ENCODE measurements at regions of chr9 and their contacts with region 1.

Region 1: DNA sequence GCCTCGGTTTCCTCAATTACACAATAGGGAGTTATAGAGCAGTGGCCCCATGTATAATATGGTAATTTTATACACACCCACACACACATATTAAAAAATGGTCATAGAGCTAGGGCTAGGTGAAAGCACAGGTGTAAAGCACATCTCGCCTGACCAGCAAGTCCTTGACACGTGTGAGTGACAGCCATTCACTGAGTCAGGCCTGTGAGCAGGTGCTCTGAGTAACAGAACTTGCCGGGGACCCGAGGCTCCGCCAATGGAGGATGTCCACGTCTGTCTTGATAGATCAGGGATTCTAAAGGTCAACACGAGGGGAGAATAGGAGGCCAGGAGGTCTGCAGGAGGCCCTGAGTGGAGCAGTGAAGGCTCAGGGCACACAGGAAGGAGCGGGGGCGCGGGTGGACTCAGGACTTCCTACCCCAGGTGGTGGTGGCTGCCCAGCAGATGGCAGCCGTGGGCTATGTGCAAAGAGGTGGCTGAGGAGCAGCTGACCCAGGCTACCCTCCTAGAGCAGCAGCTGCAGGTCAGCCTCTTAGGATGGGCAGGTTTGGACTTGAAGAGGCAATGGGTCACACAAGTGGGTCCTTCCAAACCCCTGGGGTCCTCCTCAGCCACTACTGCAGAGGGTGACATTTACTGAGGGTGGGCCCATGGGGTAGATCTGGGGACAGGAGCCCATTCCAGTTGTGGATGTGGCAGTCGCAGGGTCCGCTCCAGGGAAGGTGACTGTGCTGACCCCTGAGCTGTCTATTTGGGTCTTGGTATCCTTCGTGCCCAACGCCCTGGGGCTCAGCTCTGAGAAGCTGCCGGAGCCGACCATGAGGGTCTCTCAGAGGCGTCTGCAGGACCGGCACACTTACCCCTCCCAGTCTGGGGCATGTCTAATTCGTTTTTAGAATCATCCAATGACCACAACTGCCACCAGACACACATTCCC is 45.9 kb downstream of the PRRT1B start:
- DNase-seq: peak; percentile 92
- H3K4me3 Mint-ChIP-seq: peak overlapping the region; percentile 15
- H3K27ac Mint-ChIP-seq: peak overlapping the region; percentile 87
- H3K4me1 Mint-ChIP-seq: peaks cover 33% of the 10 kb centered on the region
- H3K27me3 Mint-ChIP-seq: no peaks in the 10 kb centered on the region

Region 2: GRCh38 chr9:131423171-131423581 is 168.0 kb before region 1 on chr9:
- intact Hi-C with region 1: no loop called
- DNase-seq: peak; percentile 63
- H3K4me3 Mint-ChIP-seq: no peak overlapping the region
- H3K27ac Mint-ChIP-seq: peak overlapping the region; percentile 30
- H3K4me1 Mint-ChIP-seq: peaks cover 45% of the 10 kb centered on the region
- H3K27me3 Mint-ChIP-seq: no peaks in the 10 kb centered on the region

Region 3: DNA sequence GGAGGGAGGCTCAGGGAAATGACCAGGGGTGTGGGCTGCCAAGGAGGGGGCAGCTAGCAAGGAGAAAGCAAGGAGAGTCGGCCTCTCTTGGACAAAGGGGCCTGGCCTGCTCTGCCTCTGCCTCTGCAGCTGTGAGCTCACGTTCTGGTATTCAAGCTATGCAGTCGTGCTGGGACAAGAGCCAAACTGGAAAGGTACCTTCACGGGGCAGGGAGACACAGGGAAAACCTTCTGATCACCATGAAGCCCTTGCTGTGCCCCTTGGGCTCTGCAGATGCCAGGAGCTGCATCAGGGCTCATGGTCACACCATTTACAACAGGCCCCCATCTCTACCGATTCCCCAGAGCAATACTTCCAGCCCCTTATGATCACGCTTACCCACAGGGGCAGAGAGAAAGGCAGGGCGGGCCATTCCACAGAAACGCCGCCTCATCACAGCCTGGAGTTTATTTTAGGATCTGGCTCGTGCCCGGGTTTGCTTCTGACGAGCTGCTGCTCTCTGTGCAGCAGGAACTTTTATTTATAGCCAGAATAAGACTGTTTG is 17.4 kb after region 1 on chr9:
- intact Hi-C with region 1: no loop called
- DNase-seq: no peak
- H3K4me3 Mint-ChIP-seq: no peak overlapping the region
- H3K27ac Mint-ChIP-seq: peak overlapping the region; percentile 39
- H3K4me1 Mint-ChIP-seq: peaks cover 9% of the 10 kb centered on the region
- H3K27me3 Mint-ChIP-seq: no peaks in the 10 kb centered on the region

Region 4: GRCh38 chr9:131627648-131628458 is 36.7 kb after region 1 on chr9:
- intact Hi-C with region 1: loop called (anchors 5 kb)
- DNase-seq: peak; percentile 89
- H3K4me3 Mint-ChIP-seq: peak overlapping the region; percentile 67
- H3K27ac Mint-ChIP-seq: peak overlapping the region; percentile 93
- H3K4me1 Mint-ChIP-seq: peaks cover 50% of the 10 kb centered on the region
- H3K27me3 Mint-ChIP-seq: no peaks in the 10 kb centered on the region

Region 5: GRCh38 chr9:131739980-131740648 is 148.9 kb after region 1 on chr9 and contains the start of gene RAPGEF1:
- intact Hi-C with region 1: loop called (anchors 1 kb)
- DNase-seq: peak; percentile 97
- H3K4me3 Mint-ChIP-seq: peak within 1 kb of the TSS; percentile 100
- H3K27ac Mint-ChIP-seq: peak within 1 kb of the TSS; percentile 93
- H3K4me1 Mint-ChIP-seq: peaks cover 60% of the 10 kb centered on the region
- H3K27me3 Mint-ChIP-seq: no peaks in the 10 kb centered on the region
- total RNA-seq, gene RAPGEF1: 150 and 153 TPM in 2 replicates

Region 6: DNA sequence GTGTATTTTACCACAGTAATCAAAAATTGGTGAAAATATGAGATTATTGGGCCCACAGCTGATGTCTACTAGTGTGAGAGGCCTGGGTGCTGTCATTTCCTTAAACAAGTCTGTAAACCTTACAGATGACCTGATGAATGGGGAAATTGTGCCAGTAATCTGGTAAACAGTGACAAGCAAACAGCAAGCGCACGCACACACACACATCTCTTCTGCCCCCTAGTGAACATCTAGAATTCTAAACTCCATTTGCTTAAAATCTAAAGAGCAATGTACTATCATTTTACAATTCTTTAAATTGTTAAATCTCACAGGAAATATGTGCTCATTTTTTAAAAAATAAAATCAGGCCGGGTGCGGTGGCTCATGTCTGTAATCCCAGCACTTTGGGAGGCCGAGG is 156.2 kb after region 1 on chr9:
- intact Hi-C with region 1: loop called (anchors 1 kb)
- DNase-seq: peak; percentile 80
- H3K4me3 Mint-ChIP-seq: no peak overlapping the region
- H3K27ac Mint-ChIP-seq: no peak overlapping the region
- H3K4me1 Mint-ChIP-seq: peaks cover 41% of the 10 kb centered on the region
- H3K27me3 Mint-ChIP-seq: peaks cover 5% of the 10 kb centered on the region